Right ventricle myocardium superior (tissue), 1 donor: ENCODE measurements at regions of chr12 and their contacts with region 1.

Region 1: DNA sequence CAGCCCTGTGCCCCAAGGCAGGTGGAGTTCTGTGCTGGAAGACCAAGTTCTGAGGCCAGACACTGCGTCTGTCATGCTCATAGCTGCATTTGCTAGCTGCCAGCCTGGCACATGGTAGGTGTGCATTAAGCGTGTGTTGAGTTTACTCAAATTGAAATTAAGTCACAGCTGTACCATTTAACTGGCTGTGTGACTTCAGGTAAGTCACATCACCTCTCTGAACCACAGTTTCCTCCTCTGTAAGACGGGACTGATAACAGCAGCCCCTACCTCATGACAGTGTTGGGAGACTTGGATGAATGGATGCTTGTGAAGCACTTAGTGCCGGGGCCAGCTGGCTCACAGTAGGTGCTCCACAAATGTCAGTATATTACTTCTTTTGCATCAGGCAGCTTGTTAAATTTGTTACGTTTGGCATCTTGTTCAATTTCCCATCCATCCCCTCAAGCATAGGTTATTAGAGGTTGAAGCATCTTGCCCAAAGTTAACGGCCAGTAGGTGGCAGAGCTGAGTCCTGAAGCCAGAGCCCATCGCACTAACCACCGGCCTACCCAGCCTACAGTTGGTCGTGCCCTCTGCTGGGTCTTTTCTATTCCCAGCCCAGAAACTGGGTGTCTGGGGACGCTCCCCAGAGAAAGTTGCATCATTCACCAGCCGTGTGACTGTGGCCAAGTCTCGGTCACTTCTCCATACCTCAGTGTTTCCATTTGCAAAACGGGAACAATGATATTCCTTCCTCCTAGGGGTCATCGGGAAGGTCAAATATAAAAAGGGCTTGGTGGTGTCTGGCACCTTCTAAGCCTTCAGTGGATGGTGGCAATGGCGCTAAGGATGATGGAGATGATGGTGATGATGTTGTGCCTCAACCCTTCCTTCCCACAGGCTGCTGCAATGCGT is 4.5 kb downstream of the DAO start:
- DNase-seq: peak; percentile 77
- ATAC-seq: peak; percentile 68

Region 2: DNA sequence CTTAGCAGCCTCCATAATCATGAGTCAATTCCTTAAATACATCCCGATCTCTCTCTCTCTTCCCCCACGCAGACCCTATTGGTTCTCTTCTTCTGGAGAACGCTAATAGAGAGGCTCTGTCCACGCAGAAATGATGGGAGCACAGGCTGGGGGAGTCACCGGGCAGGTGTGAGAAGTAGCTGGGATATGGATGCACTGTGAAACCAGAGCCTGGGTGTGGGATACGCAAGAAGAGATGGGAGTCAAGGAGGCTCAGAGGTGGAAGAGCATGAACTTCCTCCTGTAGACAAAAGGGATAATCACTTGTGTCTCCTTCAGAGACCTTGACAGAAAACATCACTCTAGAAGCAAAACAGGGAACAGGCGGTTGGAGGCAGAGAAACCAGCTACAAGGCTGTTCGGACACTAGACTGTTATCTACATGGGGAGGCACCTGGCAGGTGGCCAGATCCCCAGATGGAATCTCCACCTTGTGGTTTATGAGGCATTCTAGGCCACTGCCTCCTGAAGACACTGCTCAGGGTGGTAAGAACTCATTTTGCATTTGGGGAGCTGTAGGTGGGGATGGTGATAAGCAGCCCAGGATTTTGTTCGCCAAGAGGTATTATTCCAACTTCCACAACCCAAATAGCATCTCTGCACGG is 243.4 kb before region 1 on chr12:
- intact Hi-C with region 1: no loop called
- DNase-seq: no peak
- ATAC-seq: peak; percentile 5

Region 3: DNA sequence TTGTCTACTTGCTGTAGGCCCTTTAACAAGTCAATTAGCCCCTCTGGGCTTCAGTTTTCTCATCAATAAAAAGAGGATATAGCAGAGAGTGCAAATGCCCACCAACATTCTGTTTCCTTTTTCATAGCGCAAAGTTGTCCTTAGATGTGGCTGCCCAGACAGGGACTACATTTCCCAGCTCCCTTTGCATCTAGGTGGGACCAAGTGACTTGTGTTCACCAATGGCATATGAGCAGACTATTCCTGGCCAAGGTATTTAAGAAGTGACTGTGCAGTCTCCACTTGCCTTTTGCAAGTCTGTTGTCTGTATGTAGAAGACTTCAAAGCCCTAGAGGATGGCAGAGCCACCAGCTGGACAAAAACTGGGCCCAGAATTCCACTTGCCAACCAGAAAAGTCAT is 55.2 kb after region 1 on chr12:
- intact Hi-C with region 1: loop called (anchors 10 kb)
- DNase-seq: no peak
- ATAC-seq: peak; percentile 71

Region 4: GRCh38 chr12:109093022-109093918 is 208.9 kb after region 1 on chr12 and contains the start of gene ALKBH2:
- intact Hi-C with region 1: loop called (anchors 10 kb)
- DNase-seq: peak; percentile 97
- ATAC-seq: peak; percentile 84
- total RNA-seq, gene ALKBH2: 7.2 TPM